Posterior cingulate gyrus (tissue), 11 donors: ENCODE measurements at regions of chr1 and their contacts with region 1.

Region 1: GRCh38 chr1:2227346-2228153 is 569 bp upstream of the SKI start:
- DNase-seq: peak; percentile 89 to 99 (median 93)

Region 2: GRCh38 chr1:2189459-2190425 is 37.8 kb before region 1 on chr1:
- intact Hi-C with region 1: loop called (anchors 2 kb)
- DNase-seq: peak; percentile 88 to 99 (median 94)

Region 3: DNA sequence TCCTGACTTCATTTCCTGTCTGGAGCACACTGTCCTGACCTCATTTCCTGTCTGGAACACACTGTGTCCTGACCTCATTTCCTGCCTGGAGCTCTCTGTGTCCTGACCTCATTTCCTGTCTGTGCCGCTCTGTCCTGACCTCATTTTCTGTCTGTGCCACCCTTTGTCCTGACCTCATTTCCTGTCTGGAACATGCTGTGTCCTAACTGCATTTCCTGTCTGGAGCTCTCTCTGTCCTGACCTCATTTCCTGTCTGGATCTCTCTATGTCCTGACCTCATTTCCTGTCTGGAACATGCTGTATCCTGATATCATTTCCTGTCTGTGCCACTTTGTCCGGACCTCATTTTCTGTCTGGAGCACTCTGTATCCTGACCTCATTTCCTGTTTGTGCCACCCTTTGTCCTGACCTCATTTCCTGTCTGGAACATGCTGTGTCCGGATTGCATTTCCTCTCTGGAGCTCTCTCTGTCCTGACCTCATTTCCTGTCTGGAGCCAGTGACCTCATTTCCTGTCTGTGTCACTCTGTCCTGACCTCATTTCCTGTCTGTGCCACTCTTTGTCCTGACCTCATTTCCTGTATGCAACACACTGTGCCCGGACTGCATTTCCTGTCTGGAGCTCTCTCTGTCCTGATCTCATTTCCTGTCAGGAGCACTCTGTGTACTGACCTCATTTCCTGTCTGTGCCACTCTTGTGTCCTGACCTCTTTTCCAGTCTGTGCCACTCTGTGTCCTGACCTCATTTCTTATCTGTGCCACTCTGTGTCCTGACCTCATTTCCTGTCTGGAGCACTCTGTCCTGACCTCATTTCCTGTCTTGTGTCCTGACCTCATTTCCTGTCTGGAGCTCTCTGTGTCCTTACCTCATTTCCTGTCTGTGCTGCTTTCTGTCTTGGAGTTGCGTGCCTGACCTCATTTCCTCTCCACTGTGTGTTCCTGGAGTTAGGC is 28.1 kb after region 1 on chr1:
- intact Hi-C with region 1: loop called (anchors 2 kb)
- DNase-seq: no peak

Region 4: GRCh38 chr1:3072391-3073185 is 845.0 kb after region 1 on chr1:
- intact Hi-C with region 1: no loop called
- DNase-seq: peak in 4 of 10 donors; percentile 5 to 82 (median 77)